Left ventricle myocardium superior (tissue), 1 donor: ENCODE measurements at regions of chr6 and their contacts with region 1.

Region 1: DNA sequence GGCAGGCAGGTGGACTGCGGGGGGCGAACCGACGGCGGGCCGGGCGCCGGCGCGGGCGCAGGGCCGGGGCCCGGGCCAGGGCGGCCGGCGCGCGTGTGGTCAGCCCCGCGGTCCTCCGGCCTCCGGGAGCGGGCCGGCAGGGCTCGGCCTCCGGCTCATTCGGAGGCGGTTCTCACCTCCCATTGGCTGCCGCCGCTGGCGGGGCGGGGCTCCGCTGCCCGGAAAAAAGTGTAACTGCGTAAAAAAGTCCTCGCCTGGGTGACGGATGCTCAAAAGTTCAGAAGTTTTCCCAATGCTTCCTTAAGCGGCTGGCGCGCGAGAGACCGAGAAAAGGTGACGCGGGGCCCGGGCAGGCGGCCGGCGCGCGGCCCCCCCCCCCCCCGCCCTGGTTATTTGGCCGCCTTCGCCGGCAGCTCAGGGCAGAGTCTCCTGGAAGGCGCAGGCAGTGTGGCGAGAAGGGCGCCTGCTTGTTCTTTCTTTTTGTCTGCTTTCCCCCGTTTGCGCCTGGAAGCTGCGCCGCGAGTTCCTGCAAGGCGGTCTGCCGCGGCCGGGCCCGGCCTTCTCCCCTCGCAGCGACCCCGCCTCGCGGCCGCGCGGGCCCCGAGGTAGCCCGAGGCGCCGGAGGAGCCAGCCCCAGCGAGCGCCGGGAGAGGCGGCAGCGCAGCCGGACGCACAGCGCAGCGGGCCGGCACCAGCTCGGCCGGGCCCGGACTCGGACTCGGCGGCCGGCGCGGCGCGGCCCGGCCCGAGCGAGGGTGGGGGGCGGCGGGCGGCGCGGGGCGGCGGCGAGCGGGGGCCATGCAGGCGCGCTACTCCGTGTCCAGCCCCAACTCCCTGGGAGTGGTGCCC is at the start of gene FOXC1:
- DNase-seq: peak; percentile 91
- ATAC-seq: peak; percentile 92
- total RNA-seq, gene FOXC1: 2.7 TPM

Region 2: GRCh38 chr6:1665214-1665613 is 55.3 kb after region 1 on chr6:
- intact Hi-C with region 1: no loop called
- DNase-seq: no peak
- ATAC-seq: no peak

Region 3: DNA sequence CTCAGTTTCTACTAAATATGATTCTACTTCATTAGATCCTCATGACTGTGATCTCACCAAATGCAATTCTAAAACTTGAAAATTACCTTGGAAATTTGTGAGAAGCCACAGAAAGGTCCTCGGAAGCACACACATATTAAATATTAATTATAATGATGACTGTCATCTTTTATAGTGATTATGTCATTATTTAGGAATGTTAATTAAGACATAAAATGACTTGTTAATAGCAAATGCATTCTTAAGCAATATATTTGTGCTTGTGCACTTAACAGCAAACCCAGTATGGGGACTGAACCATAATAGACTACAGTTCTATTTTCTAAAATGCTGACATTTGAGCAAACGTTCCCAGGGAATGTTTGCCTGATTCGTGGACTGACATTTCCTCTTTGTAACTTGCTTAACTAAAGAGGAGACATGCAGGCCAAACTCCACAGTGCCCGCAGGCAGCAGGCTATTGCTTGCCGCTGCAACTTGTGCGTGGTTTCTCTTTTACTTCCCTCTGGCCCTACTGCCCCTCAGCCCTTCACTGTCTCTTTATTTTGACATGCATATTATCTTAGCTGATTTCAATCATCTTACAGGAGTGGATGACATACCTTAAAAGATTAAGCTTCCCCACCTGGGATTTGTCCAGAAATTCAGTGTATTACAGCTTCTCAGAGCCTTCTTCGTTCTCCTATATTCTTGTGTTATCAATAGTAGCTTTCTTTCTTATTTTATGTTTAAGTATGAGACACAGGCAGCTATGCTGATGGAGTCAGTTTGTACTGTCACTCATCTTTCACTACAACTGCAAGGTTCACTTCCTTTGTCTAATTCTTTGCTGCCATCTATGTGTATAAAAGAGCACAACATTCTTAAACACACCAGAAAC is 494.0 kb after region 1 on chr6:
- intact Hi-C with region 1: loop called (anchors 5 kb)
- DNase-seq: no peak
- ATAC-seq: peak; percentile 74